B cell (primary cell): ENCODE measurements at regions of chr12 and their contacts with region 1.

Region 1: DNA sequence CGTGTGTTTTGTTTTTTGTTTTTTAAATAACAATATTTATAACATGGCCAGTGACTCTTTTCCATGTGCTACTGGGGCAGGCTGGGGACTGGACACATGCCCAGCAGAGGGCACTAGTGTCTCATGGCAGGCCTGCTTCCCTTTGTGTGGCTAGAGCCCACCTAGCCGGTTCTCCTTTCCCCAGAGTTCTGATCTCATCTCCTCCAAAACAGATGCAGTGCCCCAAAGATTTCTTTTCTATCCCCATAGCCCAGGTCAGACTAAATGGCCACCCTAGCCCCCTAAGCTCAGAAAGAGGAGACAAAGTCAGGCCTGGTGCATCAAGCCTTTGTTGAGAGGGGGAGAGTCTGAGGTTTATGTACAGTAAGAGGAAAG is 21.2 kb downstream of the PRPF40B start:
- DNase-seq: peak; percentile 89
- ATAC-seq: peak; percentile 97
- H3K4me3 ChIP-seq: no peak overlapping the region
- H3K4me3 Mint-ChIP-seq: peak overlapping the region; percentile 36
- H3K27ac ChIP-seq: peak overlapping the region in 1 of 2 donors; percentile 52
- H3K27ac Mint-ChIP-seq: peak overlapping the region; percentile 79
- H3K4me1 ChIP-seq: peaks cover 16 to 18% of the 10 kb centered on the region in 2 donors
- H3K4me1 Mint-ChIP-seq: peaks cover 18% of the 10 kb centered on the region
- H3K27me3 ChIP-seq: no peaks in the 10 kb centered on the region
- H3K27me3 Mint-ChIP-seq: no peaks in the 10 kb centered on the region
- CTCF ChIP-seq: peak; percentile 96

Region 2: DNA sequence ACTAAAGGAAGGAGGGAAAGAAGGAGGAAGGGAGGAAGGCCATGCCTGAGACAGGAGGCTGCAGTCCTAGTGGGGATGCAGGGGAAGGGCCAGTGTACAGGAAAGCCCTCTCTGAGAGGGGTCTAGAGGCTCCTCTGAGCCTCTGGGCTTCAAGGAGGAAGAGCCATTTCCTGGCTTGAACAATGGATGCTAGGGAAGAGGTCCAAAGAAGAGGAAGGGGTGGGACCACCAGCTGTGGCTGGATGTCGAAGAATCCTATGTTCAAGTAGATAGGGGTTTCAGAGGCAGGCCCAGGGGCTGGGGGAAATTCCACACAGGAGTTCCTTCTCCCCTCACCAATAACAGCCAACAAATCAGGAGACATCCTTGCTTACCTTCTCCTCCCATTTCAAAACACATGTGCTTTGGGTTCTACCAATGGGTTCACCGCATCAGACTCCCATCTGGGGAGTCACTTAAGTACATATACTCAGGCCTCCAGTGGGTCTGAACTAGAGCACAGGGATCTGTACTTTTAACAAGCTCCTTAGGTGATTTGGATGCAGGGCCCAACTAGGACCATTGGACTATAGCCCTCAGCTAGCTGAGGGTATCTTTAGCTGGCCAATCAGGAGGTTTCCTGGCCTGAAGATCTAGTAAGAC is 11.1 kb after region 1 on chr12:
- CTCF ChIA-PET with region 1: interaction called, 164 read pairs
- POLR2A ChIA-PET with region 1: interaction called, 10 read pairs
- intact Hi-C with region 1: no loop called
- DNase-seq: no peak
- ATAC-seq: no peak
- H3K4me3 ChIP-seq: no peak overlapping the region
- H3K4me3 Mint-ChIP-seq: no peak overlapping the region
- H3K27ac ChIP-seq: no peak overlapping the region
- H3K27ac Mint-ChIP-seq: no peak overlapping the region
- H3K4me1 ChIP-seq: peaks cover 3 to 14% of the 10 kb centered on the region in 2 donors
- H3K4me1 Mint-ChIP-seq: peaks cover 24% of the 10 kb centered on the region
- H3K27me3 ChIP-seq: no peaks in the 10 kb centered on the region
- H3K27me3 Mint-ChIP-seq: no peaks in the 10 kb centered on the region
- CTCF ChIP-seq: no peak

Region 3: GRCh38 chr12:49673446-49674317 is 29.1 kb after region 1 on chr12:
- CTCF ChIA-PET with region 1: interaction called, 164 read pairs
- POLR2A ChIA-PET with region 1: no interaction called
- intact Hi-C with region 1: loop called (anchors 1 kb)
- DNase-seq: no peak
- ATAC-seq: no peak
- H3K4me3 ChIP-seq: no peak overlapping the region
- H3K4me3 Mint-ChIP-seq: peak overlapping the region; percentile 34
- H3K27ac ChIP-seq: peak overlapping the region; percentile 92 to 95
- H3K27ac Mint-ChIP-seq: peak overlapping the region; percentile 87
- H3K4me1 ChIP-seq: peaks cover 64 to 67% of the 10 kb centered on the region in 2 donors
- H3K4me1 Mint-ChIP-seq: peaks cover 84% of the 10 kb centered on the region
- H3K27me3 ChIP-seq: no peaks in the 10 kb centered on the region
- H3K27me3 Mint-ChIP-seq: no peaks in the 10 kb centered on the region
- CTCF ChIP-seq: no peak

Region 4: GRCh38 chr12:49707128-49707811 is 62.7 kb after region 1 on chr12 and contains the start of gene FMNL3:
- CTCF ChIA-PET with region 1: interaction called, 372 read pairs
- POLR2A ChIA-PET with region 1: interaction called, 20 read pairs
- intact Hi-C with region 1: loop called (anchors 1 kb)
- DNase-seq: peak; percentile 99
- ATAC-seq: peak; percentile 92
- H3K4me3 ChIP-seq: peak within 1 kb of the TSS; percentile 47 to 89 (median 84)
- H3K4me3 Mint-ChIP-seq: peak within 1 kb of the TSS; percentile 97
- H3K27ac ChIP-seq: peak within 1 kb of the TSS; percentile 86 to 88
- H3K27ac Mint-ChIP-seq: peak within 1 kb of the TSS; percentile 94
- H3K4me1 ChIP-seq: peaks cover 34 to 49% of the 10 kb centered on the region in 2 donors
- H3K4me1 Mint-ChIP-seq: peaks cover 47% of the 10 kb centered on the region
- H3K27me3 ChIP-seq: peaks cover 0 to 4% (median 2%) of the 10 kb centered on the region in 4 experiments
- H3K27me3 Mint-ChIP-seq: peaks cover 4% of the 10 kb centered on the region
- CTCF ChIP-seq: peak; percentile 93
- total RNA-seq, gene FMNL3: 69.9 and 73.7 TPM in 2 replicates

Region 5: GRCh38 chr12:49828133-49829091 is 183.8 kb after region 1 on chr12 and contains the start of gene NCKAP5L:
- CTCF ChIA-PET with region 1: no interaction called
- POLR2A ChIA-PET with region 1: no interaction called
- intact Hi-C with region 1: loop called (anchors 5 kb)
- DNase-seq: peak; percentile 96
- ATAC-seq: peak; percentile 98
- H3K4me3 ChIP-seq: peak within 1 kb of the TSS; percentile 60 to 84 (median 73)
- H3K4me3 Mint-ChIP-seq: peak within 1 kb of the TSS; percentile 99
- H3K27ac ChIP-seq: peak within 1 kb of the TSS; percentile 36 to 75
- H3K27ac Mint-ChIP-seq: peak within 1 kb of the TSS; percentile 97
- H3K4me1 ChIP-seq: peaks cover 26% of the 10 kb centered on the region in 2 donors
- H3K4me1 Mint-ChIP-seq: peaks cover 39% of the 10 kb centered on the region
- H3K27me3 ChIP-seq: no peaks in the 10 kb centered on the region
- H3K27me3 Mint-ChIP-seq: no peaks in the 10 kb centered on the region
- CTCF ChIP-seq: no peak
- total RNA-seq, gene NCKAP5L: 13.2 and 13.4 TPM in 2 replicates